ENCODE measurements at regions of chr17 and their contacts with region 1.

Region 1: DNA sequence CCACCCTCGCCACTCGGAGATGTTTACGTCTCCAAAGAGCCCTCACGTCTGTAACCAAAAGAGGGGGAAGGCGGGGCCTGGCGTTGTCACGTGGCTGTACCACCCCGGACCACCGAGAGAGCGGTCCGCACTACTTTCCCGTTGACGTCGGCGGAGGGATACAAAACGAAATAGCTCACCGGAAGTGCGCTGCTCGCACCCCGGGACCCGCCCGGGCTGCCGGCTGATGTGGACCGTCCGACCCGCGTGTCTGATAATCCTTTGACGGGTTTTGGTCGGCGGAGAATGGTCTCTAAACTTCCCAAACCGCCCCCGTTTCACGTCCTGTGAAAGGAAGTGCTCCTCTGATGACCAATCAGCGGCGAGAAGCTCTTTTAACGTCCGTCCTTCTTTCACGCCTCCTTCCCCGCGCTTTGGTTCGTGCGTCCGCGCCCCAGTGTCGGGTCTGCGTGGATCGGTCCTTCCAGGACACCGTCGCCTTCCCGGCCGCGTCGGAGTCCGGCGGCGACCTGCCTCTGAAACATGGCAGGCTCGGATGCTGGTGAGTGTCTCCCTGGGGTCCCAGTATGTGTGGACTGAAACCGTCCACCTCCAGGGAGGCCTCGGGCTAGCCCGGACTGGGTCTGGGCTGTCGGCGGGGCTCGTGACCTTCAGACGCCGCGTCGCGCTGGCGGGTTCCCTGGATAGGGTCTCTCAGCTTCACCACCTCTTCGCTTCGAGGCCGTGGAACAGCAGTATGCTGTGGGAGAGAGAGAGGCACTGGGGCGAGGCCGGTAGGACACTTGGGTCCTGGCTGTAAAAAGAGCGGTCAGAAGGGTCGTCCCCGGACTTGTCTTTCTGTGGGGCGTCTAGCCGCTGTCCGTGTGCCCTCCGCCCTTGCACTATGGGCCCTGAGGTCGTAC is at the start of gene CEP95:
- DNase-seq: peak; percentile 95
- H3K4me3 Mint-ChIP-seq: peak within 1 kb of the TSS; percentile 99
- H3K27ac Mint-ChIP-seq: peak within 1 kb of the TSS; percentile 100
- H3K4me1 Mint-ChIP-seq: peaks cover 56% of the 10 kb centered on the region
- H3K27me3 Mint-ChIP-seq: no peaks in the 10 kb centered on the region
- total RNA-seq, gene CEP95: 47.7 to 48.5 TPM

Region 2: GRCh38 chr17:64455993-64456885 is 50.6 kb before region 1 on chr17:
- CTCF ChIA-PET with region 1: interaction called, 3 read pairs
- POLR2A ChIA-PET with region 1: interaction called, 12 read pairs
- DNase-seq: no peak
- H3K4me3 Mint-ChIP-seq: no peak overlapping the region
- H3K27ac Mint-ChIP-seq: peak overlapping the region; percentile 76
- H3K4me1 Mint-ChIP-seq: peaks cover 24% of the 10 kb centered on the region
- H3K27me3 Mint-ChIP-seq: no peaks in the 10 kb centered on the region

Region 3: GRCh38 chr17:64534175-64534574 is 27.3 kb after region 1 on chr17:
- CTCF ChIA-PET with region 1: no interaction called
- POLR2A ChIA-PET with region 1: interaction called, 15 read pairs
- DNase-seq: no peak
- H3K4me3 Mint-ChIP-seq: no peak overlapping the region
- H3K27ac Mint-ChIP-seq: no peak overlapping the region
- H3K4me1 Mint-ChIP-seq: no peaks in the 10 kb centered on the region
- H3K27me3 Mint-ChIP-seq: no peaks in the 10 kb centered on the region

Region 4: DNA sequence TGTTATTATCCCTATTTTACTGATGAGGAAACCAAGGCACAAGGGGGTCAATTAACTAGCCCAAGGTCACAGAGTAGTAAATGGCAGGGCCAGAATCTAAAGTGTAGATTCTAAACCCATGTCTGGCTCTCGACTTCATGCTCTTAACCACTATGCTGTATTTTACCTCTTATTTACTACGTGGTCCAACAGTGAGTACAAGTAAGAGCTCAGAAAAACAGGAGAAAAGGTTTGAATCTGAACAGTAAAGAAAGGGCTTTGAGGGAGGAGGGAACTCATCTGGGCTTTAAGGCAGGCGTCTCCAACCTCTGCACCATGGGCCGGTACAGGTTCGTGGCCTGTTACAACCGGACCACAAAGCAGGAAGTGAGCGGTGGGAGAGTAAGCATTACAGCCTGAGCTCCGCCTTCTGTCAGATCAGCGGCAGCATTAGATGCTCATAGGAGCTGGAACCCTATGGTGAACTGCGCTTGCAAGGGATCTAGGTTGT is 92.4 kb after region 1 on chr17:
- CTCF ChIA-PET with region 1: interaction called, 5 read pairs
- POLR2A ChIA-PET with region 1: interaction called, 14 read pairs
- DNase-seq: peak; percentile 78
- H3K4me3 Mint-ChIP-seq: peak overlapping the region; percentile 22
- H3K27ac Mint-ChIP-seq: peak overlapping the region; percentile 31
- H3K4me1 Mint-ChIP-seq: peaks cover 33% of the 10 kb centered on the region
- H3K27me3 Mint-ChIP-seq: no peaks in the 10 kb centered on the region

Region 5: DNA sequence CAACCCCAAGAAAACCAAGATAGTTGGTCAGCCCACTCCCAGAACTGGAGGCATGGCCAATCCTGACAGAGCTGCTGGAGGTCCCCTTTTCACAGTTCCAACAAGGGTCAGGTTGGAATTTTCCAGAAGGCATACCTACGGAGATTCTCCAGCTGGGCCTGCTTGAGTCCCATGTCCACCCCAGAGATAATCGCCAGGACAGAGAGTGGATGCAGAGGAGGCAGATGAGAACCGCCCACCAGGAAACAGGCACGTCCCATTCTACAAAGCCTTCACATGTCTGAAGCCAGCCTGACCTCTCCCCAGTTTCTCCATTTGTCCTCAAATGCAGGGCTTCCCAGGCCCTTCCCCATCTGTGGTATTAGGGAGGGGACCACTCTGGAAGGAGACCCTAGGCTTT is 202.7 kb after region 1 on chr17:
- CTCF ChIA-PET with region 1: no interaction called
- POLR2A ChIA-PET with region 1: interaction called, 23 read pairs
- DNase-seq: no peak
- H3K4me3 Mint-ChIP-seq: peak overlapping the region; percentile 20
- H3K27ac Mint-ChIP-seq: peak overlapping the region; percentile 88
- H3K4me1 Mint-ChIP-seq: peaks cover 72% of the 10 kb centered on the region
- H3K27me3 Mint-ChIP-seq: no peaks in the 10 kb centered on the region

Measured in activated CD4-positive, alpha-beta memory T cell treated with anti-CD3 and anti-CD28 coated beads, Interleukin-2, amount 10 ng/mL, durations not matched to agents 7 days and 5 days (primary cell).